ENCODE measurements at regions of chr15 and their contacts with region 1.

Region 1: GRCh38 chr15:24017465-24017864 is 330.4 kb upstream of the NDN start:
- DNase-seq: no peak
- ATAC-seq: no peak
- H3K4me3 ChIP-seq: no peak overlapping the region
- H3K27ac ChIP-seq: no peak overlapping the region
- H3K4me1 ChIP-seq: no peaks in the 10 kb centered on the region
- H3K27me3 ChIP-seq: no peaks in the 10 kb centered on the region
- CTCF ChIP-seq: no peak

Region 2: GRCh38 chr15:24054547-24055245 is 37.2 kb after region 1 on chr15:
- CTCF ChIA-PET with region 1: no interaction called
- POLR2A ChIA-PET with region 1: no interaction called
- in situ Hi-C with region 1: no loop called
- intact Hi-C with region 1: no loop called
- DNase-seq: no peak
- ATAC-seq: no peak
- H3K4me3 ChIP-seq: no peak overlapping the region
- H3K27ac ChIP-seq: no peak overlapping the region
- H3K4me1 ChIP-seq: no peaks in the 10 kb centered on the region
- H3K27me3 ChIP-seq: no peaks in the 10 kb centered on the region
- CTCF ChIP-seq: no peak

Region 3: DNA sequence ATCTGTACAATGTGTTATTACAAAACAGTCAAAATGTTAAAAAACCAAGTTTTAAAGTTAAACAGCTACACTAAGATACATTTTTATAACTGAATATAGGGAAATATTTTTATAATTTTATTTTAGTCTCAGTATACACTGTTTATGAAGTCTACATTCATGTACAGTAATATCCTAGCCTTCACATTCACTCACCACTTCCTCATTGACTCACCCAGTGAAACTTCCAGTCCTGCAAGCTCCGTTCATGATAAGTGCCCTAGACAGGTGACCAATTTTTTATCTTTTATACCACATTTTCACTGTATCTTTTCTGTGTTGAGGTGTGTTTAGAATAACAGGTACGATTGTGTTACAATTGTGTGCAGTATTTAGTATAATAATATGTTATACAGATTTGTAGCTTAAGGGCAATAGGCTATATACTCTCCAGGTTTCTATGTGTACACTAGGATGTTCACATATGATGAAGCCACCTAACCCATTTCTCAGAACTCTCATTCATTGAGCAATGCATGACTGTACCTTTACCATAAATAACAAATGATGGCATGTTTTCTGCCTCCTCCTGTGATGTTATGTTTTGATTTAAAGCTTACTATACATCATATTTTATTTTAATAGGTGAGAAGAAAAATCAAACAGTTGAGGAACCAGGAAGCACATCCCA is 58.1 kb after region 1 on chr15:
- CTCF ChIA-PET with region 1: no interaction called
- POLR2A ChIA-PET with region 1: no interaction called
- in situ Hi-C with region 1: no loop called
- intact Hi-C with region 1: loop called (anchors 10 kb)
- DNase-seq: no peak
- ATAC-seq: no peak
- H3K4me3 ChIP-seq: no peak overlapping the region
- H3K27ac ChIP-seq: no peak overlapping the region
- H3K4me1 ChIP-seq: no peaks in the 10 kb centered on the region
- H3K27me3 ChIP-seq: no peaks in the 10 kb centered on the region
- CTCF ChIP-seq: no peak